PC-9 (cell line): ENCODE measurements at regions of chr10 and their contacts with region 1.

Region 1: GRCh38 chr10:8138471-8138870 is 84.0 kb downstream of the GATA3 start:
- DNase-seq: peak in 1 of 2 experiments; percentile 60
- H3K4me3 ChIP-seq: no peak overlapping the region
- H3K27ac ChIP-seq: peak overlapping the region; percentile 39; the same call in 1 of the 2 replicates
- H3K4me1 ChIP-seq: peaks cover 3% of the 10 kb centered on the region; the same call in 1 of the 2 replicates
- H3K27me3 ChIP-seq: no peaks in the 10 kb centered on the region
- CTCF ChIP-seq: no peak

Region 2: GRCh38 chr10:8128412-8128905 is 10.0 kb before region 1 on chr10:
- CTCF ChIA-PET with region 1: no interaction called
- POLR2A ChIA-PET with region 1: no interaction called
- intact Hi-C with region 1: no loop called
- DNase-seq: no peak
- H3K4me3 ChIP-seq: no peak overlapping the region
- H3K27ac ChIP-seq: no peak overlapping the region
- H3K4me1 ChIP-seq: peaks cover 14% of the 10 kb centered on the region
- H3K27me3 ChIP-seq: no peaks in the 10 kb centered on the region
- CTCF ChIP-seq: no peak

Region 3: DNA sequence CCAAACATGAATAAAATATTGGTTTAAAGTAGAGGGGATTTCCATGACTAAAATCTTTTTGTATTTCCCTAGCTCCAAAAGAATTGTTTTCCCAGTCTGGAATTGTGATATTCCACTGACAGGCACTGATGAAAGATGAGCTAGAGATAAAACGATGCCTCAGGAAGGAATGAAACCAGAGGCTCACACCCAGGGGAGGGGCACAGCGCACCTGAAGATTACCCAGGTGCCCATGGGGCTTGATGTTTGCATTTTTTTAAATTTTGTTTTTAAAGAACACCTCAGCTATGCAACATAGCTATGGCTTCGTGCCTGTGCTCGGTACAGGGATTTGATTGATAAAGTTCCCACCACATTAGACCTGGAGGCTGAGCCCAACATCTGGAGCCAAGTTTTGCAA is 513.9 kb after region 1 on chr10:
- CTCF ChIA-PET with region 1: no interaction called
- POLR2A ChIA-PET with region 1: interaction called, 12 read pairs
- intact Hi-C with region 1: no loop called
- DNase-seq: no peak
- H3K4me3 ChIP-seq: no peak overlapping the region
- H3K27ac ChIP-seq: no peak overlapping the region
- H3K4me1 ChIP-seq: no peaks in the 10 kb centered on the region
- H3K27me3 ChIP-seq: no peaks in the 10 kb centered on the region
- CTCF ChIP-seq: no peak